Activated CD4-positive, alpha-beta memory T cell treated with anti-CD3 and anti-CD28 coated beads for 36 hours (primary cell): ENCODE measurements at regions of chr12 and their contacts with region 1.

Region 1: DNA sequence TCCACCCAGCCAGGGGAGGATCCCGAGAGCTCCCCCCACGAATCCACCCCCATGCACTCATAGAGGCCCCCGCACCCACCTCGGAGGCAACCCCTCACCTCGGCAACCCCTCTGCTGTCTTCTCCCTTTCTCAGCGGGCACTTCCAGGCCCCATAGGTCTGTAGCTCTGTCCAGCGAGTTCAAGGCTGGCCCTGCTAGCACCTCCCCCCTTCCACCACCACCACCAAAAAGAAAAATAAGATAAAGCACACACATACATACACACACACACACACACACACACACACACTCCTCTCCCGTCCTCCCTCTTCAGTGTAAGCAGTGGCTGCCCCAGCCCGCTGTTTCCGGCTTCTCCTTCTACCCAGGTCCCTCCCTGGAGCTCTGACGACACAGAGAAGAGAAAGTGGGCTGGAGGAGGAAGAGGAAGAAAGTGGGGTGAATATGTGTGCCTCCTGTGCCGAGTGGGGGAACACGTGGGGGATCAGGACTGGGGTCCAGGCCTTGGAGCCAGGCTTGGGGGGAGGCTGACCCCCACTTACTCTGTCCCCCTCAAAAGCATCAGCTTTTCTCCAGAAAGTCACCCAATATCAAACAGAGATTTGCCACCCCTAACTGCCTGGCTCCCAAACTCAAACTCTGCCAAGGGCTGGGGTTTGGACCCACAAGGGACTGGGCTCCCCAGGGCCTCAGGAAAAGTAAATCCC is at the start of gene STAT6:
- DNase-seq: peak; percentile 89
- H3K4me3 Mint-ChIP-seq: peak within 1 kb of the TSS; percentile 90
- H3K27ac Mint-ChIP-seq: peak within 1 kb of the TSS; percentile 95
- H3K4me1 Mint-ChIP-seq: peaks cover 49% of the 10 kb centered on the region
- H3K27me3 Mint-ChIP-seq: no peaks in the 10 kb centered on the region
- total RNA-seq, gene STAT6: 209 to 218 TPM

Region 2: DNA sequence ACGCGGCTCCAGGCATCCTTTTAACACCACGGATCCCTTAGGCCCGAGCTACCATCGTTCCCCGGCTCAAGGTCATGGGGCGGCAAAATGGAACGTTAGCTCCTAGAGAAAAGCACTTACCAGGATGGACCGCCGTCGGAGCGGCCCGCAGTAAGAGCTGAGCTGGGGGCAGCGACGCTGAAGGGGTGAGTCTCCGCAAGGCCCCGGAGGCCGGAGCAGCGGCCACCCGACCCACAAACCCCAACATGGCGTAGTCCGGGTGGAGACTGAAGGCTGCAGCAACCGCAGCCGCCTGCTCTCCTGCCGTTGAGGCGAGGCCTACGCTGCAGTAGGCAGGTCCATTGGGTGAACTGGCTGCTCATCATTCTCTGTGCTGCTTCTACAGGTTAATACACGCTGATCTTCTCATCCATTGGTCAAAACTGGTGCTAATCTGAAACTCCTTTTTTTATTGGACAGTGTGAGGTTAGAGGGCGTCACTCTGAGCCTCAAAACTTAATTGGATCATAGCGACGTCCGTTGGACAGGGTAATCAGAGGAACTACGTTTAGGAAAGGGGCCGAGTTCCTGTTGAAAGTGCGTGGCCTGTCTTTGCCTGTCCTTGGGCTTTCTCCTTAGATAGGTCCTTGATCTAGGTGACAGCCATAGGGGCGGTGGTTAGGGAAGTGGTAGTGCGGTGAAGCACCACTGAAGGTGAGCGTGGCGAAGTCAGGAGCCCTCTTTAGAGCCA is 465.3 kb before region 1 on chr12 and contains the start of gene ATP5F1B:
- CTCF ChIA-PET with region 1: no interaction called
- POLR2A ChIA-PET with region 1: no interaction called
- intact Hi-C with region 1: loop called (anchors 5 kb)
- DNase-seq: peak; percentile 96
- H3K4me3 Mint-ChIP-seq: peak within 1 kb of the TSS; percentile 96
- H3K27ac Mint-ChIP-seq: peak within 1 kb of the TSS; percentile 98
- H3K4me1 Mint-ChIP-seq: peaks cover 32% of the 10 kb centered on the region
- H3K27me3 Mint-ChIP-seq: no peaks in the 10 kb centered on the region
- total RNA-seq, gene ATP5F1B: 709 to 722 TPM

Region 3: DNA sequence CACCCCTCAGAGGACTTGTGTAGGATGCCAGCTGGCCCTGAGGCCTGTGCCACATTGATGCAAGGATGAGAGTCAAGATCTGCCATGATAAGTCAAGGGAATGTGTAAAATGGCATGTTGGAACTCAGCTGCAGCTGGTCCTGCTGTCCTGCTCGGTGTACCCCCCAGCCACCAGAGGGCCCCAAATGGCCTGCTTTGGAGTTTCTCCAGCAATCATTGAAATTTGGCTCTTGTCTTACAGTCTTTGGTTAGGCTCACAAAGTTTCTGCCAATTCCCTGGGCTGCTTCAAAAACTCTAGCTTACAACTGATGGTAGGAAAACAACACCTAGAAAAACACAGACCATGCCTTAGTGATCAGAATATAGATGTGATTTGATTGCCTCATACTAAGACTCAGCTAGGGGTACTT is 271.3 kb before region 1 on chr12:
- CTCF ChIA-PET with region 1: interaction called, 6 read pairs
- POLR2A ChIA-PET with region 1: no interaction called
- intact Hi-C with region 1: loop called (anchors 10 kb)
- DNase-seq: peak; percentile 57
- H3K4me3 Mint-ChIP-seq: no peak overlapping the region
- H3K27ac Mint-ChIP-seq: no peak overlapping the region
- H3K4me1 Mint-ChIP-seq: peaks cover 19% of the 10 kb centered on the region
- H3K27me3 Mint-ChIP-seq: no peaks in the 10 kb centered on the region

Region 4: GRCh38 chr12:56884421-56884820 is 226.8 kb before region 1 on chr12:
- CTCF ChIA-PET with region 1: no interaction called
- POLR2A ChIA-PET with region 1: no interaction called
- intact Hi-C with region 1: no loop called
- DNase-seq: no peak
- H3K4me3 Mint-ChIP-seq: no peak overlapping the region
- H3K27ac Mint-ChIP-seq: no peak overlapping the region
- H3K4me1 Mint-ChIP-seq: no peaks in the 10 kb centered on the region
- H3K27me3 Mint-ChIP-seq: peaks cover 25% of the 10 kb centered on the region

Region 5: GRCh38 chr12:57005980-57006808 is 105.0 kb before region 1 on chr12 and contains the start of gene ZBTB39:
- CTCF ChIA-PET with region 1: interaction called, 47 read pairs
- POLR2A ChIA-PET with region 1: interaction called, 11 read pairs
- intact Hi-C with region 1: loop called (anchors 1 kb)
- DNase-seq: peak; percentile 68
- H3K4me3 Mint-ChIP-seq: peak within 1 kb of the TSS; percentile 91
- H3K27ac Mint-ChIP-seq: peak within 1 kb of the TSS; percentile 71
- H3K4me1 Mint-ChIP-seq: peaks cover 63% of the 10 kb centered on the region
- H3K27me3 Mint-ChIP-seq: no peaks in the 10 kb centered on the region
- total RNA-seq, gene ZBTB39: 5.5 to 5.7 TPM

Region 6: DNA sequence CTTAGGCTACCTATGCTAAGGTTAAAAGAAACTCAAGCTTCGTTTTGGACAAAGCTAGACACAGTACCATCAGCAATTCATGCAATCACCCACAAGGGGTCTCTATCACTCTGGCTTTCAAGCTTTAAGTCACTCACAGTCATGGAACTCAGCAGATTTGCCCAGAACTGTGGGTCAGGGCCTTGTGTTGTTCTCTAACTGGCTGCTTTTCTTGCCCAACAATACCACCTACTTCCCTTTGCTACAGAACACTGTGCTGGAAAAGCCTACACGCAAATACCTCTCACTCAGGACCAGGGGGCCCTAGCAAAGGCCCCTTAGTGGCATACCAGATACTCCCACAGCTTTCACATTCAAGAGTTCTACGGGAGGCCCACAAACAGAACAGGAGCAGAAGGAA is 41.7 kb before region 1 on chr12:
- CTCF ChIA-PET with region 1: interaction called, 261 read pairs
- POLR2A ChIA-PET with region 1: interaction called, 20 read pairs
- intact Hi-C with region 1: loop called (anchors 1 kb)
- DNase-seq: peak; percentile 68
- H3K4me3 Mint-ChIP-seq: peak overlapping the region; percentile 17
- H3K27ac Mint-ChIP-seq: peak overlapping the region; percentile 91
- H3K4me1 Mint-ChIP-seq: peaks cover 63% of the 10 kb centered on the region
- H3K27me3 Mint-ChIP-seq: no peaks in the 10 kb centered on the region

Region 7: GRCh38 chr12:57124259-57124877 is 13.2 kb after region 1 on chr12:
- CTCF ChIA-PET with region 1: interaction called, 105 read pairs
- POLR2A ChIA-PET with region 1: interaction called, 17 read pairs
- intact Hi-C with region 1: no loop called
- DNase-seq: peak; percentile 83
- H3K4me3 Mint-ChIP-seq: no peak overlapping the region
- H3K27ac Mint-ChIP-seq: no peak overlapping the region
- H3K4me1 Mint-ChIP-seq: peaks cover 11% of the 10 kb centered on the region
- H3K27me3 Mint-ChIP-seq: peaks cover 6% of the 10 kb centered on the region

Region 8: DNA sequence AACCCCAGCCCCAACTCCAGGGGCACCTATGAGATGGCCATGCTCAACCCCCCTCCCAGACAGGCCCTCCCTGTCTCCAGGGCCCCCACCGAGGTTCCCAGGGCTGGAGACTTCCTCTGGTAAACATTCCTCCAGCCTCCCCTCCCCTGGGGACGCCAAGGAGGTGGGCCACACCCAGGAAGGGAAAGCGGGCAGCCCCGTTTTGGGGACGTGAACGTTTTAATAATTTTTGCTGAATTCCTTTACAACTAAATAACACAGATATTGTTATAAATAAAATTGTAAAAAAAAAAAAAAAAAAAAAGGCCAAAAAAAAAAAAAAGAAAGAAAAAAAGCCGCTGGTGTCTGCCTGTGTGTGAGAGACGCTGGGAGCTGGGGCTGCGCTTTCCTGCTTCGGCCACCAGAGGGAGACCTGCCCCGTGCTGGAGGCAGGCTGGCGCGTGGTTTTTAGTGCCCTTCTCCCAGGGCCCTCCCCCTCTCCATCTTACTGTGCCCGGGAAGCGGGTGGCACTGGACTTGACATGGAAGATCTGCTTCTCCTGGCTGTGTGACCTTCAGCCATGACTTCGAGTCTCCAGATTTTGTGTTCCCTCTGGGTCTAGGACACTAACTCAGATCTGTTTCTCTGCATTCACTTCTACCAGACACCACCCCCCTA is 102.0 kb after region 1 on chr12:
- CTCF ChIA-PET with region 1: interaction called, 10 read pairs
- POLR2A ChIA-PET with region 1: no interaction called
- intact Hi-C with region 1: no loop called
- DNase-seq: peak; percentile 90
- H3K4me3 Mint-ChIP-seq: no peak overlapping the region
- H3K27ac Mint-ChIP-seq: no peak overlapping the region
- H3K4me1 Mint-ChIP-seq: peaks cover 31% of the 10 kb centered on the region
- H3K27me3 Mint-ChIP-seq: peaks cover 40% of the 10 kb centered on the region

Region 9: DNA sequence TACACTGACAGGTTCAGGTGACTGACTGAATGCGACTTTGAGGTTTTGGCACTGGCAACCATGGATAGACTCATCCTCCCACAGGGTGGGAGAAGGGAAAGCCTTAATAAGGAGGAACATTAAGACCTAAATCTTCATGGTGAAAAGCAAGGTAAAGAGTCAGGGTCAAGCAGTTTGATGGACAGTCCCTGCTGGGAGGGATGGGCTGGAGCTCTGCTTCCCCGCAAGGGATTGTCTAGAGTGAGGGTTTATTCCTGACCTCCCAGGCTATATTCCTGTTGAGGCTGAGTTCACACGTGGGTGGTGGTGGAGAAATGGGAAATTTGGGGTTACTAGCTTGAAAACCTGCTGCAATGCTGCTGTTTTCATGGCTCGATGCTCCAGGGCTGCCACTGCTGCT is 149.2 kb after region 1 on chr12:
- CTCF ChIA-PET with region 1: no interaction called
- POLR2A ChIA-PET with region 1: no interaction called
- intact Hi-C with region 1: no loop called
- DNase-seq: no peak
- H3K4me3 Mint-ChIP-seq: no peak overlapping the region
- H3K27ac Mint-ChIP-seq: no peak overlapping the region
- H3K4me1 Mint-ChIP-seq: peaks cover 4% of the 10 kb centered on the region
- H3K27me3 Mint-ChIP-seq: no peaks in the 10 kb centered on the region